ENCODE measurements at regions of chr5 and their contacts with region 1.

Region 1: GRCh38 chr5:154940772-154941620 is at the start of gene MRPL22:
- DNase-seq: peak; percentile 93
- ATAC-seq: peak; percentile 60
- H3K4me3 ChIP-seq: peak within 1 kb of the TSS; percentile 86
- H3K27ac ChIP-seq: peak within 1 kb of the TSS; percentile 84
- H3K4me1 ChIP-seq: peaks cover 2% of the 10 kb centered on the region
- H3K27me3 ChIP-seq: no peaks in the 10 kb centered on the region
- CTCF ChIP-seq: no peak
- POLR2A ChIP-seq: 0 out of 2 replicates have a peak, but pooled peaks have one; percentile 48
- RAD21 ChIP-seq: no peak
- total RNA-seq, gene MRPL22: 13.3 and 21.7 TPM in 2 replicates

Region 2: GRCh38 chr5:154445422-154446182 is 495.4 kb before region 1 on chr5 and contains the start of gene SAP30L:
- CTCF ChIA-PET with region 1: no interaction called
- POLR2A ChIA-PET with region 1: no interaction called
- dilution Hi-C with region 1: no loop called
- in situ Hi-C with region 1: no loop called
- intact Hi-C with region 1: loop called (anchors 5 kb)
- DNase-seq: peak; percentile 89
- ATAC-seq: peak; percentile 93
- H3K4me3 ChIP-seq: peak within 1 kb of the TSS; percentile 97
- H3K27ac ChIP-seq: peak within 1 kb of the TSS; percentile 84
- H3K4me1 ChIP-seq: peaks cover 7% of the 10 kb centered on the region
- H3K27me3 ChIP-seq: no peaks in the 10 kb centered on the region
- CTCF ChIP-seq: no peak
- POLR2A ChIP-seq: peak; percentile 54; the same call in 1 of the 2 replicates
- RAD21 ChIP-seq: no peak
- total RNA-seq, gene SAP30L: 9.7 and 13.1 TPM in 2 replicates

Region 3: GRCh38 chr5:154647114-154647760 is 293.8 kb before region 1 on chr5:
- CTCF ChIA-PET with region 1: interaction called, 3 read pairs
- POLR2A ChIA-PET with region 1: no interaction called
- dilution Hi-C with region 1: no loop called
- in situ Hi-C with region 1: no loop called
- intact Hi-C with region 1: loop called (anchors 2 kb)
- DNase-seq: peak; percentile 12
- ATAC-seq: peak; percentile 25; the same call in 1 of the 2 replicates
- H3K4me3 ChIP-seq: no peak overlapping the region
- H3K27ac ChIP-seq: no peak overlapping the region
- H3K4me1 ChIP-seq: no peaks in the 10 kb centered on the region
- H3K27me3 ChIP-seq: peaks cover 5% of the 10 kb centered on the region
- CTCF ChIP-seq: no peak
- POLR2A ChIP-seq: no peak
- RAD21 ChIP-seq: no peak

Region 4: GRCh38 chr5:154857530-154858296 is 83.3 kb before region 1 on chr5:
- CTCF ChIA-PET with region 1: no interaction called
- POLR2A ChIA-PET with region 1: no interaction called
- dilution Hi-C with region 1: no loop called
- in situ Hi-C with region 1: no loop called
- intact Hi-C with region 1: loop called (anchors 5 kb)
- DNase-seq: peak; percentile 96
- ATAC-seq: peak; percentile 81
- H3K4me3 ChIP-seq: peak overlapping the region; percentile 61
- H3K27ac ChIP-seq: peak overlapping the region; percentile 94
- H3K4me1 ChIP-seq: peaks cover 1% of the 10 kb centered on the region; the same call in 1 of the 2 replicates
- H3K27me3 ChIP-seq: no peaks in the 10 kb centered on the region
- CTCF ChIP-seq: 0 out of 2 replicates have a peak, but pooled peaks have one; percentile 0
- POLR2A ChIP-seq: peak; percentile 80
- RAD21 ChIP-seq: no peak

Region 5: DNA sequence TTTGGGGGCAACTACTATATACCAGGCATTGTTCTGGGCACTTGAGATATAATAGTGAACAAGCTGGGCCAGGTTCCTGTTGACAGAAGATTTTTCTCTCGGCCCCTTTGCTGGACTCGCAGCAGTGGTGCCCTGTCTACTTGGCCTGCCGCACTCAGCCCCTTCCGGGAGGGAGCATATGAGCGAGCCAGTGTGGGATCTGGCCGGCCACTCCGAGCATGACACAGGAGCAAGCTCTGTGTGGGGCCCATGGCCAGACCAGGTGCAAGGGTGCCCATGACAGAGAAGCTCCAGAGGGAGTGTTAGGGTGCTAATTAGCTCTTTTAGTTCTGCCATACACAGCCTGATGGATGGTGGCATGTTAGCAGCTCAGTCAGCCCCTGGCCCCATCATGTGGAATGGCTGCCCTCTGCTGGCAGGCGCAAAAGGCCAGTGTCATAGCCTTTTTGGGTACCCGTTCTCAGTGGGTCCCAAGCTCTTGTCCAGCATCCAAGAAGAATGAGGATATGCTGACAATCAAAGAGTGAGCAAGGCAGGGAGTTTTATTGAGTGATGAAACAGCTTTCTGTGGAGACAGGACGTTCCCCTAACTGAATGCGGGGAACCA is 63.2 kb after region 1 on chr5:
- CTCF ChIA-PET with region 1: no interaction called
- POLR2A ChIA-PET with region 1: no interaction called
- dilution Hi-C with region 1: no loop called
- in situ Hi-C with region 1: no loop called
- intact Hi-C with region 1: loop called (anchors 2 kb)
- DNase-seq: no peak
- ATAC-seq: peak; percentile 48
- H3K4me3 ChIP-seq: no peak overlapping the region
- H3K27ac ChIP-seq: no peak overlapping the region
- H3K4me1 ChIP-seq: no peaks in the 10 kb centered on the region
- H3K27me3 ChIP-seq: no peaks in the 10 kb centered on the region
- CTCF ChIP-seq: peak; percentile 41
- POLR2A ChIP-seq: no peak
- RAD21 ChIP-seq: peak; percentile 42

Measured in IMR-90 (cell line).